Tibial artery (tissue), 4 donors: ENCODE measurements at regions of chr4 and their contacts with region 1.

Region 1: DNA sequence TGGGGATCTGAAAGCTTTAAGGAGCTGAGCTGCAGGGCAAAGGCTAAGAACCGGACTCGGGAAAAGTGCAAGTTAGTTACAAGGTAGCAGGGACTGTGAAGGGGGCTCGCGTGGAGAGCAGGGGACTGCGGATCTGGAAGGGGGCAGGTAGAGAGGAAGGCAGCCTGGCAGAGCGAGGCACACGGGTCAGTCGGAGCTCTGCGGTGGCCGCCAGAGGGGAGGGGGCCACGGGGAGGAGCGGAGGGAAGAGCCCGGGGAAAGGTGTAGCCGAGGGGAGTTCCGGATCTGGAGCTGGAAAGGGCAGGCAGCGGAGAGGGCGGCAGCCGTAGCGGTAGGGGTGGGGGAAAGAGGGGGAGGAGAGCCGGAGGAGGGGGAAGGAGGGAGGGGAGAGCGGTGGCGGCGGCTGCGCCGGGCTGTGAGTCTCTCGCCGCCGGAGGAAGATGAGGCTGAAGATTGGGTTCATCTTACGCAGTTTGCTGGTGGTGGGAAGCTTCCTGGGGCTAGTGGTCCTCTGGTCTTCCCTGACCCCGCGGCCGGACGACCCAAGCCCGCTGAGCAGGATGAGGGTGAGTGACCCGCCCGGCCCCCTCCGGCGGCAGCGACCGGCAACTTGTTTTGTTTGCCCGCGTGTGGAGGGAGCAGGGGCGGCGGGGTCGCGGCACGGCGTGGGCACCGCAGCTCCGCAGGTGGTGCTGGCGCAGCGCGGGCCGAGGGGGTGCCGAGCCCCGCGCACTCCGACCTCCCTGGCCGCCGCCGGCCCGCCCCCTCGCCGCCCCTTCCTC is at the start of gene GALNT7:
- DNase-seq: peak; percentile 67 to 79
- H3K4me3 ChIP-seq: peak within 1 kb of the TSS; percentile 72 to 93
- H3K27ac ChIP-seq: peak within 1 kb of the TSS; percentile 85 to 94
- H3K4me1 ChIP-seq: peaks cover 0 to 23% (median 12%) of the 10 kb centered on the region in 4 donors
- H3K27me3 ChIP-seq: no peaks in the 10 kb centered on the region
- CTCF ChIP-seq: no peak

Region 2: DNA sequence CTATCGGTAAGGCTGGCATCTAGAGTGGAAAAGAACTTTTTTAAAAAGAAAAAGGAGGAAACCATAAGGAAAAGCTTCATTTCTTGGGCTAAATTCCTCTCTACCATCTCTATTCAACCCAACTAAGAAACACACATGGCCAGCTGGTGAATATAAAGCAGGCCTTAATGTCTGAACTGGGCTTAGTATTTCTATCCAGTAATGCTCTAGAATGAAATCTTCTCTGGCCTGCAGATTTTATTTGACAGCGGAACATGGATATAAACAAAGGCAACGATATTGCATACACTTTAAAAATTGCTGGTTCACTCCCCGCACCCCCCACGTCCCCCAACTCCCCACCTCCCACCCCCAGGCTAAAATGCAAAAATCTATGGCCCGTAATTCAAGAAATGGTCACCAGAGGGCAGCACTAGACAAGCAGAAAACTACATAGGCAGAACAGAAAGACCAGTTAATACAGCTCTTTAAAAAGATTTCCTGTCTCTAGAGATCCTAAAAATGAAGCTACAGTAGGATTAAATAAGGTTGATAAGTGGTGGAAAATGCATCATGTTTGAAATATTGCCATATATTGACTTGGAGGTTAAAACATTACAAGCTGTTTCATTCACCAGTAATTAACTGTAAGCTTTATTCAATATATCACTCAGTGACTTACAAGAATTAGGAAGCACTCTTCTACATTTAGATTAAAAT is 155.2 kb before region 1 on chr4:
- intact Hi-C with region 1: loop called (anchors 10 kb)
- DNase-seq: peak in 1 of 2 donors; percentile 31
- H3K4me3 ChIP-seq: no peak overlapping the region
- H3K27ac ChIP-seq: no peak overlapping the region
- H3K4me1 ChIP-seq: peaks cover 0 to 13% (median 0%) of the 10 kb centered on the region in 4 donors
- H3K27me3 ChIP-seq: no peaks in the 10 kb centered on the region
- CTCF ChIP-seq: peak; percentile 53 to 77